PC-9 (cell line): ENCODE measurements at regions of chr19 and their contacts with region 1.

Region 1: GRCh38 chr19:52139252-52140031 is at the start of gene ZNF616:
- DNase-seq: peak; percentile 82 to 88
- H3K4me3 ChIP-seq: peak within 1 kb of the TSS; percentile 74
- H3K27ac ChIP-seq: peak within 1 kb of the TSS; percentile 76
- H3K4me1 ChIP-seq: peaks cover 24% of the 10 kb centered on the region
- H3K27me3 ChIP-seq: no peaks in the 10 kb centered on the region
- CTCF ChIP-seq: peak; percentile 93
- total RNA-seq, gene ZNF616: 9.9 and 12.6 TPM in 2 replicates

Region 2: GRCh38 chr19:51688672-51689571 is 450.5 kb before region 1 on chr19:
- CTCF ChIA-PET with region 1: no interaction called
- POLR2A ChIA-PET with region 1: no interaction called
- intact Hi-C with region 1: no loop called
- DNase-seq: peak; percentile 72 to 96
- H3K4me3 ChIP-seq: peak overlapping the region; percentile 89
- H3K27ac ChIP-seq: no peak overlapping the region; the same call in 1 of the 2 replicates
- H3K4me1 ChIP-seq: peaks cover 29% of the 10 kb centered on the region
- H3K27me3 ChIP-seq: no peaks in the 10 kb centered on the region
- CTCF ChIP-seq: peak; percentile 33; the same call in 1 of the 2 replicates

Region 3: GRCh38 chr19:52095172-52096014 is 44.0 kb before region 1 on chr19 and contains the start of gene ZNF841:
- CTCF ChIA-PET with region 1: no interaction called
- POLR2A ChIA-PET with region 1: no interaction called
- intact Hi-C with region 1: loop called (anchors 2 kb)
- DNase-seq: peak; percentile 88 to 99
- H3K4me3 ChIP-seq: peak within 1 kb of the TSS; percentile 85
- H3K27ac ChIP-seq: peak within 1 kb of the TSS; percentile 73
- H3K4me1 ChIP-seq: peaks cover 10% of the 10 kb centered on the region
- H3K27me3 ChIP-seq: no peaks in the 10 kb centered on the region
- CTCF ChIP-seq: peak; percentile 44; the same call in 1 of the 2 replicates
- total RNA-seq, gene ZNF841: 20.4 and 24.9 TPM in 2 replicates

Region 4: DNA sequence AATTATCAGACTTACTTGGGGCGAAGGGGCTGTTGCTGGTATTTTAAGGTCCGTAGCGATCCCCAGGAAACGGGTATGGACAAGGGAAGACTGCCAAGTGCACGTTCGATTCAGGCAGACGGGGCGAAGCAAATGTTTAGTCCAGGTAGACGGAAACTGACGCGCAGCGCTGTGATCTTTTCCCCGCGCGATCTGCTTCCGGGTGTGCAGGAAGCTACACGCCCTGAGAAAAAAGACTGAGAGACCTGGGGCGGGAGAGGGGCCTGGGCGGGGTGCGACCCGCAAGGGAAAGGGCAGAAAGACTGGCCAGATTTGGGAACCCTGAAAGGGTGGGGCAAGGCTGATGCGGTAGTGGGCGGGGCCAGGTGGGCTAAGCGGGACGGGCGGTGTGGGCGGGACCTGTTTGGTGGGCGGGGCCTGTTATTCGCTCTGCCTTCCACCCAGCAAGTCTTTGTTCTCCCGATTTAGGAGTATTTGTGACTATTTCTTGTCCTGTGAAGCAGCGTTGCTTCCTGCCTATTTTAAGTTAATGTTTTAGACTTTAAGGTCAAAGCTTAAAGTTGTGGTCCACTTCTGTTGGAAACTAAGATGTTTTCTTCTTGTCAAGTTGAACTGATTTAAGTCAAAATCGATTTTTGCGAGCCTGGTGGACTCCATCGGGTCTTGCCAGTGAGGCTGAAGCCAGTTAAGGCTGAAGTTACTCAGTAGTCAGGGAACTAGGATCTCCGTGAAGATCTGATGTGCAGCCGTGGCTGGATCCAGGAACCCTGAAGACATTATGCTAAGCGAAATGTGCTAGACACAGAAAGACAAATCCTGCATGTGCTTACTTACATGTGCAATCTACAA is 32.1 kb after region 1 on chr19 and contains the start of gene ZNF836:
- CTCF ChIA-PET with region 1: interaction called, 3 read pairs
- POLR2A ChIA-PET with region 1: no interaction called
- intact Hi-C with region 1: loop called (anchors 1 kb)
- DNase-seq: peak; percentile 67 to 88
- H3K4me3 ChIP-seq: peak within 1 kb of the TSS; percentile 95
- H3K27ac ChIP-seq: no peak within 1 kb of the TSS
- H3K4me1 ChIP-seq: peaks cover 18% of the 10 kb centered on the region
- H3K27me3 ChIP-seq: no peaks in the 10 kb centered on the region
- CTCF ChIP-seq: no peak
- total RNA-seq, gene ZNF836: 12.2 and 14.3 TPM in 2 replicates

Region 5: DNA sequence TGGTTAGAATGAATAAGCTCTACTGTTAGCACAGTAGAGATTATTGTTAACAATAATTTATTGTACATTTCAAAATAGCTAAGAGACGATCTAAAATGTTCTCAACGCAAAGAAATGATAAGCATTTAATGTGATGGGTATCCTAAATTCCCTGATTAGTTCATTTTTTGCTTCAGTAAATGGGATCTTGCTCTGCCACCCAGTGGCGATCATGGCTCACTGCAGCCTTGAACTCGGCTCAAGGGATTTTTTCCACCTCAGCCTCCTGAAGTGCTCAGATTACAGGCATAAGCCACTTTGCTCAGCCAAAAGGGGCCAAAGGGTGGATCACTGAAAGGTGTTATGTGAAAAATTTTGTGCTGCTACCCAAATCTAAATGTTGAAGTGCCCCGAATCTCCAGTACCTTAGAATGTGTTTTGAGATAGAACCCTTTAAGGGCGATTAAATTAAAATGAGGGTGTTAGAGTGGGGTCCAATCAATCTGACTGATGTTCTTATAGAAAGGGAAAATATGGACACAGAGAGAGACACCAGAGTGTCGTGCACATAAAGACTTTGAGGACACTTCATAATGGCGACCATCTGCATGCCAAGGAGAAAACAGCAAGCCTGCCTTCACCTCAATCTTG is 98.4 kb after region 1 on chr19:
- CTCF ChIA-PET with region 1: interaction called, 8 read pairs
- POLR2A ChIA-PET with region 1: no interaction called
- intact Hi-C with region 1: loop called (anchors 1 kb)
- DNase-seq: peak; percentile 58 to 63
- H3K4me3 ChIP-seq: no peak overlapping the region
- H3K27ac ChIP-seq: no peak overlapping the region
- H3K4me1 ChIP-seq: no peaks in the 10 kb centered on the region
- H3K27me3 ChIP-seq: peaks cover 5% of the 10 kb centered on the region
- CTCF ChIP-seq: peak; percentile 96

Region 6: DNA sequence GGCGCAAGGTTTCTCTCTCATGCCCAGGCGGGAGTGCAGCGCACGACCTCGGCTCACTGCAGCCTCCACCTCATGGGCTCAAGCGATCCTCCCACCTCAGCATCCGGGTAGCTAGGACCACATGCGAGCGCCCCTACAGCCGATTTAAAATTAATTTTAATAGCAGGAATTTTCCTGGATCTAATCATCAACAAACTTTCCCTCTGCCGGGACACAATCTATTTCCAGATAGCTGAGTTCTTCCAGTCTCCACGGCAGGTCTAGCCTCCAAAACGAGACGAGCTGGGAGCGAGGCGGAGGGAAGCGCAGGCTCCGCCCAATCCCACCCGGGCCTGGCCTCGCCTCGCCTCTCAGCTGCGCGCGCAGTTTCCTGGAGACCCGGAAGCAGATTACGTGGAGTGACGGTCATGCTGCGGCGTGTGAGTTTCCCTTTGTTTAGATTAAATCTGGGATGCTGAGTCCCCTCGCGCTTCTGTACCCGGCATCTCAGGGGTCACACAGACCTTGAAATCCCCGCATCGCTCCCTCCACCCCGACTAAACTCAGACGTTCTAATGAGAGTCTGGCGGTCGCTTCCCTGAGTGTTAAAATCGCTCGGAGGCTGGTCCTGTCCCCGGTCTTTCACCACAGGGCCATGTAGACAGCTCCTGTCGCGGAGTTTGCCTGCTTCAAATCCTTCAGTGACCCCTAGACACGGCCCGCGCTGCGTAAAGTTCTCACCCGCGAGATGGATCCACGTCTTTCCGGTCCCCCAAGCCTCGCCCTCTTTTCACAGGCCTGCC is 230.3 kb after region 1 on chr19 and contains the start of gene ZNF880:
- CTCF ChIA-PET with region 1: no interaction called
- POLR2A ChIA-PET with region 1: no interaction called
- intact Hi-C with region 1: no loop called
- DNase-seq: peak; percentile 78 to 95
- H3K4me3 ChIP-seq: peak within 1 kb of the TSS; percentile 78
- H3K27ac ChIP-seq: peak within 1 kb of the TSS; percentile 67
- H3K4me1 ChIP-seq: 0 out of 2 replicates have a peak, but pooled peaks cover 8% of the 10 kb centered on the region
- H3K27me3 ChIP-seq: no peaks in the 10 kb centered on the region
- CTCF ChIP-seq: no peak
- total RNA-seq, gene ZNF880: 20.8 and 27.3 TPM in 2 replicates

Region 7: DNA sequence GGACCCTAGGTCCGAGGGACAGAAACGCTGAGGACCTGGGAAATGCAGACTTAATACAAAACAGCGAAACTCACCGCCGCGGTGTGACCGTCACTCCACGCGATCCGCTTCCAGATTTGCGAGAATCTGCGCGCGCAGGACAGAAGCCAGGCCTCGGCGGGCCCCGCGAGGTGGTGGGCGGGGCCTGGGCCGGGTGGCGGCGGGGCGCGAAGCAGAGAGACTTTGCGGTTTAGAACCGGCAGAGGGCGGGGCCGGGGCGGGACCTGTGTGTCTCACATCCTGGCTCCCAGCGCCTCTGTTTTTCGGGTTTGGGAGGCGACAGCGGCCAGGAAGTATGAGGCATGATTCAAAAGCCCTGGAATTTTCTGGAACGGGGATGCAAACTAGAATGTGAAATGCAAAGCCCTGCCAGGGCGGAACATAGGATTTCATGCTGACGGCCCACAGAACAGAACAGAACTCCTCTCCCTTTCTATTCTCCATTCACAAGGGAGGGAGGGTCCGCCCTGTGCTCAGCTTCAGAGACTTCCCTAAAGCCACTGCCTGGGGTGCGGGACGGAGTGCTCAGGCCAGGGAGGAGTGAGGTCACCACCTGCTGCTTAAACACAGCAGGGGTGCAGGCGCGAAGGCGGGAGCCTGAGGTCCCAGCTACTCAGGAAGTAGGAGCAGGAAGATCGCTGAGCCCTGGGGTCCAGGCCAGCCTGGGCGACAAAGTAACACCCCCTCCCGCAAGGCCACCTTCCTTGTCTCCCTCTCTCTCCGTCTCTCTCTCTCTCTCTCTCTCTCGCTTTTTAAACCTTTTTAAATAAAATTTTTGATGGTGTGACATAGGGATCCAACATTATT is 551.1 kb after region 1 on chr19:
- CTCF ChIA-PET with region 1: no interaction called
- POLR2A ChIA-PET with region 1: no interaction called
- intact Hi-C with region 1: no loop called
- DNase-seq: peak; percentile 88 to 93
- H3K4me3 ChIP-seq: peak overlapping the region; percentile 91
- H3K27ac ChIP-seq: peak overlapping the region; percentile 52
- H3K4me1 ChIP-seq: peaks cover 32% of the 10 kb centered on the region
- H3K27me3 ChIP-seq: no peaks in the 10 kb centered on the region
- CTCF ChIP-seq: peak; percentile 39; the same call in 1 of the 2 replicates